Brain microvascular endothelial cell (primary cell): ENCODE measurements at regions of chr15 and their contacts with region 1.

Region 1: DNA sequence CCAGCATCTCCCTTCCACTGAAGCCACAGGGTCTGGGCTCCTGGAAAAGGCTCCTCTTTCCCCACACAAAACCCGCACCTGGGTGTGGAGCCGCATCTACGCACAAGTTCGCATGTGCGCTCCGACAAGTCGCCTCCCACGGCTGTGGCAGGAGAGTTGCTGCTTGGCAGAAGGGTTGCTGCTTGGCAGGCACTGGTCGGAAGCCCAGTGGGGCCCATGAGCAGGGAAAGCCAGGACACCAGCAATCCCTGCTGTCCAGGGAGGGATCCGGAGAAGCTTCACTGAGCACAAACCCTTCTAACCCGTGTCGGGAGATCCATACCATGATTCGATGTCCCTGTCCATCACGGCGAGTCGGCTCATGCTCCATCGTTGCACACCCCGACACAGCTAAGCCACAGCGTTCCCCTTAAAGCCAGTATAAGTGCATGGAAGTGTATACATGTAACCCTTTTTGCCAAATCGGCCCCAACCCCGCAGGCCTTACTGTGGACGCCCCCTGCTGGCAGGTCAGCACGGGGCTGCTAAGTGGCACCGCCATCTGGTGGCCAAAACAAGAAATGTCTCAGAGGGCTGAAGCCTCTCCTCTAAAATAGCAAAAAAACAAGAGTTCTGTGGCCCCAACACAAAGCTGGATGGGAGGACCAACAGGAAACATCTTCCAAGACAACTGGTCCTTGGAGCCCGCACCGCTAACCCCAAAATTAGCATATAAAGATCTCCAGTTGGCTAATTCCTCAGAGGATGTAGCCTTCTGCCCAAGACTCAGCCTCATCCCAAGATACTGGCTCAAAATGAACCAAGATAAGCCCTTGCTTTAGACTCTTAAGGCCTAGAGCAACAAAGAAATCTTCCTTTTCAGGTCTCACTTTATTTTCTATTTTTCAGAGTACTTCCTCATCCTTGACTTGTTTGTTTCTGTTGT is 8.3 kb downstream of the ANKRD63 start:
- DNase-seq: peak; percentile 70
- H3K4me3 ChIP-seq: no peak overlapping the region
- H3K27ac ChIP-seq: no peak overlapping the region
- H3K27me3 ChIP-seq: peaks cover 6% of the 10 kb centered on the region
- CTCF ChIP-seq: peak; percentile 100

Region 2: DNA sequence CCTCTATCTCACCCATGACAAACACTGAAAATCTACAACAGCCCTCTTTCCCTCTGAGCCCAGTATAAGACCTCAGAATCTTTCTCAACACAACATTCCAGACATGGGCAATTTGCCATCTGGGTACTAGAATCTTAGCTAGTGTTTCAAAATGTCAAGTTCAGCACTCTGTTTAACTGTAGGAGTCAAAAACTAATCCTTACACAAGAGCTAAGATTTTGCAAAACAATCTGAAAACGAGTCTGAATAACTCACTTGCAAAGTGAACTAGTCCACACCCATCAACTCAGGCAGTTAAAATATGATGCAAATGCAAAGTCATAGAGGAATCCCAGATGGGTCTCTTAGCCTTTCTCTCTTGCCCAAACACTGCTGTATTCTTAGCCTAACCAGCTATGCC is 422.4 kb before region 1 on chr15:
- in situ Hi-C with region 1: no loop called
- DNase-seq: peak; percentile 43
- H3K4me3 ChIP-seq: no peak overlapping the region
- H3K27ac ChIP-seq: peak overlapping the region; percentile 18
- H3K27me3 ChIP-seq: no peaks in the 10 kb centered on the region
- CTCF ChIP-seq: no peak

Region 3: GRCh38 chr15:40226736-40227135 is 47.9 kb before region 1 on chr15:
- in situ Hi-C with region 1: loop called (anchors 5 kb)
- DNase-seq: no peak
- H3K4me3 ChIP-seq: no peak overlapping the region
- H3K27ac ChIP-seq: no peak overlapping the region
- H3K27me3 ChIP-seq: no peaks in the 10 kb centered on the region
- CTCF ChIP-seq: no peak

Region 4: DNA sequence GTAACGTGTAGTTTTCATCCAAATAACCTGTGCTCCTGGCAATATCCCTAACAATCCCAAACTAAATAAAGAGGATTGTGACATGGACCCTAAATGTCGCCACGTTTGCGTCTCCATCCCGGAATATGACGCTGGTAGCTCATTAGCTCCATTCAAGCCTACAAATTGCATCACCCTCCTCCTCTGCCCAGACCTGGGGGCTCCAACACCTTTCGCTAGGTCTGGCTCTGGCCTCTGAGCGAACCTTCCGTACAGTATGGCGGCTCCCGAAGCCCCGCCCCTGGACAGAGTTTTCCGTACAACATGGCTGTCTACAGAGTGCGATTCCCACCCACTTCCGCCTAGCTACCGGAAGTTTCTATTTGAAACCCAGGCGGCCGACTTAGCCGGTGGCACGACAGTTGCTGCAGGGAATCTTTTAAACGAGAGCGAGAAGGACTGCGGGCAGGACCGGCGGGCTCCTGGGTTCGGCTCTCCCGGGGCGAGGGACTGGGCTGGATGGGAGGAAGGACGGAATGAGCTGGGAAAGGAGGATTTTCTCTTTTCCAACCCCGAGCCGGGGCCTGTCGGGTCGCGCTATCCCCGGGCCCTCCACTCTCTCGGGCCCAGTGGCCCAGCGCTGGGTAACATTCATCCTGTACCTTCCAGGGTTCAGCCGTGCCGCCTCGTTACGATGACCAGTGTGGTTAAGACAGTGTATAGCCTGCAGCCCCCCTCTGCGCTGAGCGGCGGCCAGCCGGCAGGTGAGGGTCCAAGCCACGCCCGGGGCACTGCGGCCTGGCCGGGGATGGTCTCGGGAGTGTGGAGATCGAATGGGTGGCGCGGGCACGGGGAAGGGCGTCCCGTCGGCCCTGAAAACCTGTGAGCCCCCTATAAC is 108.2 kb after region 1 on chr15 and contains the start of gene KNSTRN:
- in situ Hi-C with region 1: no loop called
- DNase-seq: peak; percentile 93
- H3K4me3 ChIP-seq: peak within 1 kb of the TSS; percentile 91
- H3K27ac ChIP-seq: peak within 1 kb of the TSS; percentile 39
- H3K27me3 ChIP-seq: no peaks in the 10 kb centered on the region
- CTCF ChIP-seq: no peak